ENCODE measurements at regions of chr13 and their contacts with region 1.

Region 1: GRCh38 chr13:41054212-41054877 is 7.0 kb upstream of the WBP4 start:
- DNase-seq: peak; percentile 46 to 57
- H3K4me3 ChIP-seq: no peak overlapping the region
- H3K4me3 Mint-ChIP-seq: no peak overlapping the region
- H3K27ac Mint-ChIP-seq: peak overlapping the region; percentile 47
- H3K4me1 ChIP-seq: peaks cover 43% of the 10 kb centered on the region
- H3K4me1 Mint-ChIP-seq: peaks cover 47% of the 10 kb centered on the region
- H3K27me3 ChIP-seq: no peaks in the 10 kb centered on the region
- H3K27me3 Mint-ChIP-seq: no peaks in the 10 kb centered on the region
- CTCF ChIP-seq: peak; percentile 51 to 66

Region 2: DNA sequence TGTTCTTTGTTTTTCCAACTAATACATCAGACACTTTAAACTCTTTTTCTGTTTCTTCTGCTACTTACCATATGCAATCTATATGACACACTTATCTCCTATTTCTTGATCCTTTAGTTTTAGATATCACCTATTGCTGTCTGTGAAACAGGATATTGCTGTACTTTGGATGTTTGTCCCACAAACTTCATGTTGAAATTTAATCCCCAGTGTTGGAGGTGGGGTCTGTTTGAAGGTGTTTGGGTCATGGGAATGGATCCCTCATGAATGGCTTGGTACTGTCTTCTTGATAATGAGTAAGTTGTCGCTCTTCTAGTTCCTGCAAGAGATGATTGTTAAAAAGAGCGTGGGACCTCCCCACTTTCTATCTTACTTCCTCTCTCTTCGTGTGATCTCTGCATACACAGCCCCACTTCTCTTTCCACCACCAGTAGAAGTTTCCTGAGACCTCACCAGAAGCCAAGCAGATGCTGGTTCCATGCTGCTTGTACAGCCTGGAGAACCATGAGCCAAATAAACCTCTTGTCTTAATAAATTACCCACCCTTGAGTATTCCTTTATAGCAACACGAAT is 1771.9 kb before region 1 on chr13:
- CTCF ChIA-PET with region 1: no interaction called
- POLR2A ChIA-PET with region 1: no interaction called
- intact Hi-C with region 1: no loop called
- DNase-seq: no peak
- H3K4me3 ChIP-seq: no peak overlapping the region
- H3K4me3 Mint-ChIP-seq: no peak overlapping the region
- H3K27ac Mint-ChIP-seq: no peak overlapping the region
- H3K4me1 ChIP-seq: no peaks in the 10 kb centered on the region
- H3K4me1 Mint-ChIP-seq: no peaks in the 10 kb centered on the region
- H3K27me3 ChIP-seq: no peaks in the 10 kb centered on the region
- H3K27me3 Mint-ChIP-seq: peaks cover 3% of the 10 kb centered on the region
- CTCF ChIP-seq: no peak

Region 3: GRCh38 chr13:40974460-40975407 is 79.6 kb before region 1 on chr13:
- CTCF ChIA-PET with region 1: interaction called, 8 read pairs
- POLR2A ChIA-PET with region 1: no interaction called
- intact Hi-C with region 1: loop called (anchors 1 kb)
- DNase-seq: peak; percentile 70 to 71
- H3K4me3 ChIP-seq: no peak overlapping the region
- H3K4me3 Mint-ChIP-seq: peak overlapping the region; percentile 47
- H3K27ac Mint-ChIP-seq: peak overlapping the region; percentile 69
- H3K4me1 ChIP-seq: peaks cover 70% of the 10 kb centered on the region
- H3K4me1 Mint-ChIP-seq: peaks cover 63% of the 10 kb centered on the region
- H3K27me3 ChIP-seq: no peaks in the 10 kb centered on the region
- H3K27me3 Mint-ChIP-seq: no peaks in the 10 kb centered on the region
- CTCF ChIP-seq: peak; percentile 65 to 67

Measured in Caco-2 (cell line).